BJ (cell line): ENCODE measurements at regions of chr16 and their contacts with region 1.

Region 1: DNA sequence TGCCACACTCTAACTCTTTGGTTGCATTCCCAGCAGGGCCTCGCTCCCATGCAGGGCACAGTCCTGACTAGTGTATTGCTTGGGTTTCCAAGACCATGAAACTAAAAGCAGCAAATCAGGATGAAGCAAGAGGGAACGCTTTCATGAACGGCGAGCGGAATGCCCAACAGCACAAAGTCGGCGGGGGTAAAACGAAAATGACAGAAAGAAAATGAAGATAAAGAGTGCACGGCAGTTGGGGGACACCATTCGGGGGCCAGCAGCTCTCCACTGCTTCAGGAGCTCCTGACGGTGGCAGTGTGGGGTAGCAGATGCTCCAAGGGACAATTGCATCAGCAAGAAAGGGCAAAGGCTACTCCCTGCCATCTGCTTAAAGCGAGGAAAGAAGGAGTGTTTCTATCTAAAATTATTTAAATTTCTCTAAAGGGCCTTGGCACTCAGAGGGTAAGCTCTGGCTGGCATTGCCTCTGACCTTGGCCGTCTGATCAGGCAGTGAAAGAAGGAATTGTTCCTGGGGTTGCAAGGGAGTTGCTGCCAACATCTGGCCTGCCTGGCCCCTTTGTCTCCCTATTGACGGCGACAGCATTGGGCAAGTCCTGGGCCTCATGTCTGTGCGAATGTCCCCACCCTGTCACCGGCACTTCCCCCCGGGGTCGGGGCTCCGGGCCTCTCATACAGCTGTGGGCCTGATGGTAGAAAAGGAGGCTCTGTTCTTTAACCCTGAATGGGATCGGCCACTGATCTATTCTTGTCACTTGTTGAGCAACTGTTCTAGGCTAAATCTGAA is 138.2 kb downstream of the CMIP start:
- DNase-seq: no peak
- H3K4me3 ChIP-seq: no peak overlapping the region
- H3K27me3 ChIP-seq: no peaks in the 10 kb centered on the region
- CTCF ChIP-seq: peak; percentile 43

Region 2: GRCh38 chr16:81606039-81606438 is 23.2 kb after region 1 on chr16:
- CTCF ChIA-PET with region 1: no interaction called
- POLR2A ChIA-PET with region 1: no interaction called
- DNase-seq: no peak
- H3K4me3 ChIP-seq: no peak overlapping the region
- H3K27me3 ChIP-seq: no peaks in the 10 kb centered on the region
- CTCF ChIP-seq: no peak

Region 3: GRCh38 chr16:81696961-81697615 is 114.2 kb after region 1 on chr16:
- CTCF ChIA-PET with region 1: interaction called, 13 read pairs
- POLR2A ChIA-PET with region 1: no interaction called
- DNase-seq: no peak
- H3K4me3 ChIP-seq: no peak overlapping the region
- H3K27me3 ChIP-seq: no peaks in the 10 kb centered on the region
- CTCF ChIP-seq: peak; percentile 79